ENCODE measurements at regions of chr11 and their contacts with region 1.

Region 1: DNA sequence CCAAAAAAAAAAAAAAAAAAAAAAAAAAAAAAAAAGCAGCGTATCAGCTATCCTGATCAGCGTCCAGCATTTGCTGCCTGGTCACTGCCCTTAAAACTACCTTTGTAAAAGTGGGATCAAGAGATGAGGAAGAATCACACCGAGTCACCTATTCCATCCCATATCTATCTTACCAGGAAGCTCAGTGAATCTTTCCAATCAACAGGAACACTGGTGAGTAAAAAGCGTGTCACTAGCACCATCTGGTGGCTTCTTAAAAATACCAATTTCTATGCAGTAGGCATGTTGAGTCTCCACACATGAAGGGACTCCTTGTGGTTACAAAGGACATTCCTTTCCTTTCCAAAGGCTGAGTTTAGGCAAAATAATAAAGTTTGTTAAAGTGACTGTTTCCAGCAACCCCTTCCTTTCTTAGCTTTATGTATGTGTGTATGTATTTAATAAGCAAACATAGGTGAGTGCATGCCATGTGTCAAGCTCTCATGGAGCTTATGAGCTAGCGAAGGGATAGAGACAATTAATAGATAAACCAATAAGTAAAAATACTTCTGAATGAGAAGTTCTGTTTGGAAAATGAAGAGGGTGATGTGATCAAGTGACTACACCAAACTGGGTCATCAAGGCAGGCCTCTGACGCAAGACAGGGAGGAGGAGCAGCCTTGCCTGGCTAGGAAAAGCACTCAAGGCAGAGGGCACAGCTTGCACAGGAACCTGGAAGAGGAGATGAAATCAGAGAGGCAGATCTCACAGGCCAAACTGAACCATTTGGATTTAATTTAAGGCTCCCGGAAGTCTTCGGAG is 13.9 kb upstream of the TP53AIP1 start:
- DNase-seq: peak; percentile 81
- H3K4me3 Mint-ChIP-seq: no peak overlapping the region
- H3K27ac Mint-ChIP-seq: no peak overlapping the region
- H3K4me1 Mint-ChIP-seq: peaks cover 7% of the 10 kb centered on the region
- H3K27me3 Mint-ChIP-seq: no peaks in the 10 kb centered on the region
- CTCF ChIP-seq: peak; percentile 73

Region 2: GRCh38 chr11:128172046-128172878 is 784.3 kb before region 1 on chr11:
- CTCF ChIA-PET with region 1: interaction called, 7 read pairs
- POLR2A ChIA-PET with region 1: no interaction called
- intact Hi-C with region 1: loop called (anchors 1 kb)
- DNase-seq: peak; percentile 87
- H3K4me3 Mint-ChIP-seq: no peak overlapping the region
- H3K27ac Mint-ChIP-seq: peak overlapping the region; percentile 88
- H3K4me1 Mint-ChIP-seq: peaks cover 23% of the 10 kb centered on the region
- H3K27me3 Mint-ChIP-seq: no peaks in the 10 kb centered on the region
- CTCF ChIP-seq: peak; percentile 78

Region 3: GRCh38 chr11:128772814-128773213 is 183.8 kb before region 1 on chr11:
- CTCF ChIA-PET with region 1: no interaction called
- POLR2A ChIA-PET with region 1: no interaction called
- intact Hi-C with region 1: no loop called
- DNase-seq: no peak
- H3K4me3 Mint-ChIP-seq: no peak overlapping the region
- H3K27ac Mint-ChIP-seq: no peak overlapping the region
- H3K4me1 Mint-ChIP-seq: no peaks in the 10 kb centered on the region
- H3K27me3 Mint-ChIP-seq: no peaks in the 10 kb centered on the region
- CTCF ChIP-seq: no peak

Region 4: GRCh38 chr11:128841461-128842072 is 115.0 kb before region 1 on chr11:
- CTCF ChIA-PET with region 1: no interaction called
- POLR2A ChIA-PET with region 1: no interaction called
- intact Hi-C with region 1: no loop called
- DNase-seq: no peak
- H3K4me3 Mint-ChIP-seq: no peak overlapping the region
- H3K27ac Mint-ChIP-seq: no peak overlapping the region
- H3K4me1 Mint-ChIP-seq: no peaks in the 10 kb centered on the region
- H3K27me3 Mint-ChIP-seq: peaks cover 16% of the 10 kb centered on the region
- CTCF ChIP-seq: no peak

Region 5: DNA sequence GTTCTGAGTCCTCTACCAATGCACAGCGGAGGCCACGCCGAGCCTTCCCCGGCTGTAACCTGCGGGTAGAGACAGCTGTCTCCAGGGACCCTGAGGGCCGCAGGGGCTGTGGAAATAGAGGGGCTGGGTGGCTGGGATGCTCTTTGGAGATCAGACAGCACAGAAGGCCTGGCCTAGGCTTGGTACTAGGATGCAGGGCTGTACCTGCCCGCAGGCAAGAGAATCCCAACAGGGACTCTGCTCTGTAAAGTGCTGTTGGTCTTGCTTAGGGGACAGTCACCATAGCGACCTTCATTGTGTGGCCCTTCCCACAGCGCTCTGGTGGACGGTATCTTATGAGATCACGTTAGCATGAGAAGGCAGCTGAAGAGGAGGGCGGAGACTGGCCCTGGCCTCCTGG is 76.8 kb before region 1 on chr11:
- CTCF ChIA-PET with region 1: interaction called, 598 read pairs
- POLR2A ChIA-PET with region 1: interaction called, 18 read pairs
- intact Hi-C with region 1: loop called (anchors 1 kb)
- DNase-seq: no peak
- H3K4me3 Mint-ChIP-seq: no peak overlapping the region
- H3K27ac Mint-ChIP-seq: no peak overlapping the region
- H3K4me1 Mint-ChIP-seq: no peaks in the 10 kb centered on the region
- H3K27me3 Mint-ChIP-seq: peaks cover 22% of the 10 kb centered on the region
- CTCF ChIP-seq: no peak

Region 6: GRCh38 chr11:128942817-128943427 is 13.7 kb before region 1 on chr11 and contains the start of gene TP53AIP1:
- CTCF ChIA-PET with region 1: interaction called, 66 read pairs
- POLR2A ChIA-PET with region 1: interaction called, 3 read pairs
- intact Hi-C with region 1: no loop called
- DNase-seq: no peak
- H3K4me3 Mint-ChIP-seq: no peak within 1 kb of the TSS
- H3K27ac Mint-ChIP-seq: peak within 1 kb of the TSS; percentile 86
- H3K4me1 Mint-ChIP-seq: peaks cover 22% of the 10 kb centered on the region
- H3K27me3 Mint-ChIP-seq: no peaks in the 10 kb centered on the region
- CTCF ChIP-seq: no peak
- total RNA-seq, gene TP53AIP1: 4.5 and 5.8 TPM in 2 replicates

Region 7: DNA sequence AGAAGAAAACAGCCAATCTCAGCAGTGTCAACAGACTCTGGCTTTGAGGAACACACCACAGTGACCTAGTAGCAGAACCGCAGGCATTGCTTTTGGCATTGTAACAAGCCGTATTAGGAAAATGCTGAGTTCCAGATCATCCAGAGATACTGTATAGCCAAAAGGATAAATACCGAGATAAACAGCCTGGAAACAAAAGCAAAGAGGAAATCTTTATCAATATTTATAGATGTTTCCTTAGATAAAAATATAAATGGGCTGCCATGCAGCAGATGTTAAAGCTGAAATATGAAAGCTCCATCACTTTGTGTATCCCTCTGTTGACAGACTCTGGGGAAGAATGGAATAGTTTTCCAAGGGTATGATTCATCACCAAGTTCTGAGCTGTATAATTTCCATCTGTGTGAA is 85.0 kb after region 1 on chr11:
- CTCF ChIA-PET with region 1: no interaction called
- POLR2A ChIA-PET with region 1: no interaction called
- intact Hi-C with region 1: no loop called
- DNase-seq: no peak
- H3K4me3 Mint-ChIP-seq: no peak overlapping the region
- H3K27ac Mint-ChIP-seq: no peak overlapping the region
- H3K4me1 Mint-ChIP-seq: no peaks in the 10 kb centered on the region
- H3K27me3 Mint-ChIP-seq: no peaks in the 10 kb centered on the region
- CTCF ChIP-seq: no peak

Region 8: GRCh38 chr11:129331871-129332274 is 375.3 kb after region 1 on chr11:
- CTCF ChIA-PET with region 1: interaction called, 4 read pairs
- POLR2A ChIA-PET with region 1: no interaction called
- intact Hi-C with region 1: loop called (anchors 5 kb)
- DNase-seq: peak; percentile 88
- H3K4me3 Mint-ChIP-seq: no peak overlapping the region
- H3K27ac Mint-ChIP-seq: peak overlapping the region; percentile 25
- H3K4me1 Mint-ChIP-seq: peaks cover 12% of the 10 kb centered on the region
- H3K27me3 Mint-ChIP-seq: no peaks in the 10 kb centered on the region
- CTCF ChIP-seq: peak; percentile 78